AG04449 (cell line): ENCODE measurements at regions of chr9 and their contacts with region 1.

Region 1: DNA sequence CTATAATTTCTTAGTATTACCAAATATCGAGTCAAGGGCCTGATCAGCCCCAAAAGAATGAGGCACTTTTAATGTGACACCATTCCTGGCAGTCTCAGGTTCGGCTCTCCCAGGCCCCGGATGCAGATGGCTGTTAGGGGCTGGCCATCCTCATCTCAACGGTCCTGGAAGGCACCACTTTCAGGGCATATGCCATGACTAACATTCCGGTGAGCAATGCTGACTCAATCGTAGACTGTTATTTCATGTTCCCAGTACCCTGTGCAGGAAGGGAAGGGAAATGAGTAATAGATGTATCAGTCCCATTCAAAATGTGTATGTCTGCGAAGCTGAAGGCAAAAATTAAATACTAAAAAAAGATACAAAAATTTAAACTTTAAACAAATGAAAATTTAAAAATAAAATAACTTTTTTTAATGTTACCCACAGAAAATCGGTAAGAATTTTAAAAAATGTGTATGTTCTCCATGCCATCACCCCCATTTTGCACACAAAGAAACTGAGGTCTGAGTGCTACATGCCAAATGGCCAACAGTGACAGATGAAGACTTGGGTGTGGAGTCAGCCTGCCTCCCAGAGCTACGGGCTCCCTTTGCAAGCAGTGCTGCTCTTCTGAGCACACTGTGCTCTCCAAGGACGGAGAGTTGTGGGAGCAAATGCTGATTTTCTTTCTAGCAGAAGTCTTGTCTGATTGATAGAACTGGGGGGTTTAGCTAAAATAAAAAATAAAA is 79.0 kb downstream of the GLDC start:
- DNase-seq: peak; percentile 80
- H3K4me3 ChIP-seq: peak overlapping the region; percentile 46
- CTCF ChIP-seq: no peak

Region 2: DNA sequence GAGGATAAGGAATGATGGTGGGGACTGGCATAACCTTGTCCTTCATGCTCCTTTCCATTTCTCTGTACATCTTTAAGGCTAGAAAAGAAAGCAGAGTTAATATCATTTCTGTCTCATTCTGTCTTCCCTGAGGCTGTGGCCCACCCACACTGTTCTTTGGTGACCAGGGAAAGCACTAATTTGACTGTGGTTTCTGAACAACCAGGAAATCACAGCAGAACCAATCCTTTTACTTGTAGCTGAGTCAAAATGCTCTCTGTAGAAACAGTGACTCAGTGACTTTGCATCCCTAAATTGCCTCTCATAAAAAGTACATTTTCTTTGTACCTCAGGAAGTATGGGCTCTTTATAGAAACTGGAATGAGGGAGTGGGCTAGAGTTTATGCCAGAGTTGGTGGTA is 322.8 kb before region 1 on chr9:
- CTCF ChIA-PET with region 1: no interaction called
- POLR2A ChIA-PET with region 1: no interaction called
- DNase-seq: no peak
- H3K4me3 ChIP-seq: no peak overlapping the region
- CTCF ChIP-seq: no peak

Region 3: GRCh38 chr9:6348766-6349165 is 217.8 kb before region 1 on chr9:
- CTCF ChIA-PET with region 1: interaction called, 330 read pairs
- POLR2A ChIA-PET with region 1: interaction called, 3 read pairs
- DNase-seq: no peak
- H3K4me3 ChIP-seq: no peak overlapping the region
- CTCF ChIP-seq: no peak

Region 4: GRCh38 chr9:6353851-6354686 is 212.5 kb before region 1 on chr9:
- CTCF ChIA-PET with region 1: interaction called, 330 read pairs
- POLR2A ChIA-PET with region 1: interaction called, 3 read pairs
- DNase-seq: no peak
- H3K4me3 ChIP-seq: no peak overlapping the region
- CTCF ChIP-seq: peak; percentile 69

Region 5: DNA sequence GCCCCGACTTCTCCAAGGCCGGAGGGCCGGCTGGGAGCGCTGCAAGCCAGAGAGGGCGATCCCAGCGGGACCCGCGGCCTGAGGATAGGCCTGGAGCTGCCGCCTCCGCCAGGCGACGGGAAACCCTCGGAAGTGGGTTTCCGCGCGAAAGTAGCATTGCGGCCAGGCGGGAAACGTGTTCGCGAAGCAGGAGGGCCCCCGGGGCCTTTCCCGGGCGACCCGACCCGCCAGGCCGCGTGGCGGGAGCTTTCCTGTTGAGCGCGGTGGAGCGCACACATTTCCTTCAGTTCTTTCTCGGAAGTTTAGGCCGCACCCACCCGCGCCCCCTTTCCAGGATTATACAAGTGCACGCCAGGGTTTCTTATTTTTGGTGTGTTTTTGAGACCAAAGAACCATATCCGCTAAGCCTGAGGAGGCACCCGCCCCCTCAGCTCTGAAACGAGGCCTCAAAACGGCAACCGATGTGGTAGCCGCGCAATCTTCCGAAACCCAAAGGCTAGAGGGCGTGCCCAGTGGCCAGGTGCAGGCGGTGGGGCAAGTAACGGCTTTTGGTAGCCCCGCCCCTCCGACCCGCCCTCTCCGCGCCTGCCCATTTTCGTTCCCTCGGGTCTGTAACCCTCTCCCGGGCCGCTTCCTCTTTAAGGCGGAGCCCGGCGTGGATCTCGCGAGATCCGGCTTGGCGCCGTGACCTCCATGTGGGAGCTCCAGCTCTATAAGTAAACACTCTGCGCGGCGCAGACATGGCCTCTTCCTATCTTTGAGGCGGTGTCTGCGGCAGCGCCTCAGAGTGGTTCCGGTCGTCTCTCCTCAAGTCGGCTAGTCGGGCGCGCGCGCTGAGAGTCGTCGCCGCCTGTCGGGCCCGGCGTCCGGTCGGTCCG is 153.8 kb before region 1 on chr9 and contains the start of gene UHRF2:
- CTCF ChIA-PET with region 1: interaction called, 40 read pairs
- POLR2A ChIA-PET with region 1: interaction called, 19 read pairs
- DNase-seq: peak; percentile 81
- H3K4me3 ChIP-seq: peak within 1 kb of the TSS; percentile 90
- CTCF ChIP-seq: no peak

Region 6: GRCh38 chr9:6525326-6526045 is 41.1 kb before region 1 on chr9:
- CTCF ChIA-PET with region 1: no interaction called
- POLR2A ChIA-PET with region 1: no interaction called
- DNase-seq: peak; percentile 38
- H3K4me3 ChIP-seq: no peak overlapping the region
- CTCF ChIP-seq: no peak

Region 7: GRCh38 chr9:6552033-6552432 is 14.5 kb before region 1 on chr9:
- CTCF ChIA-PET with region 1: interaction called, 14 read pairs
- POLR2A ChIA-PET with region 1: no interaction called
- DNase-seq: no peak
- H3K4me3 ChIP-seq: no peak overlapping the region
- CTCF ChIP-seq: peak; percentile 4

Region 8: DNA sequence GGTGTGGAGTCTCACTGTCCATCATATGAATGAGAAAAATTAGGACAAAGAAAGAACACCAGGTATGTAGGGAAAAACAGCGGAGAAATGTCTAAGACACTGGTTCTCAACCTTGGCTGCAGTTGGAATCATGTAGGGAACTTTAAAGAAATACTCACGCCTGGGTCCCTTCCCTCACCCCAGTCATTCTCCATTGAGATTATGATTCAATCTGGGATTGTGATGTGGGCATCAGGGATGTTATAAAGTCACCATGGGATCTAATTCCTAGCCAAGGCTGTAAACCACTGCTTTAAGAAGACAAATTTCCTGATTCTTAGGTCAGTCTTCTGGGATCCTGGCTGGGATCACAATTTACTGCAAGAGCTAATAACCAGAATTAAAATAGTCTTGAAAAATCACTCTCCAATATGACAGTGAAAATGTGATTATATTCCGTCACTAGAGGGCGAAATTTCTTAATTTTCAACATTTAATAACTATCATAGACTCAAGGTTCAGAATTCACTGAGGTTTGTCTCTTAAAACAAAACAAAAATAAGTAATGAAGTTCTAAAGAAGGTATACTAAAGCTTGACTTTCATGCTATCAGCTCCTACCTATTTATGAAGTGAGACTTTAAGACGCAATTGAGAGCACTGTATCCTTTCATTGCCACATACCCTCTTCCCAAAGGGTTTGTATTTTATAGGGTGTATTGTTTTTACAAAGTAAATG is 18.5 kb after region 1 on chr9:
- CTCF ChIA-PET with region 1: interaction called, 36 read pairs
- POLR2A ChIA-PET with region 1: no interaction called
- DNase-seq: no peak
- H3K4me3 ChIP-seq: no peak overlapping the region
- CTCF ChIP-seq: no peak

Region 9: GRCh38 chr9:6889868-6890267 is 323.3 kb after region 1 on chr9:
- CTCF ChIA-PET with region 1: no interaction called
- POLR2A ChIA-PET with region 1: no interaction called
- DNase-seq: no peak
- H3K4me3 ChIP-seq: no peak overlapping the region
- CTCF ChIP-seq: no peak

Region 10: GRCh38 chr9:6944093-6944551 is 377.5 kb after region 1 on chr9:
- CTCF ChIA-PET with region 1: no interaction called
- POLR2A ChIA-PET with region 1: no interaction called
- DNase-seq: peak; percentile 46
- H3K4me3 ChIP-seq: no peak overlapping the region
- CTCF ChIP-seq: no peak